Ovary (tissue), 10 donors: ENCODE measurements at regions of chr3 and their contacts with region 1.

Region 1: GRCh38 chr3:33636125-33636850 is 81.8 kb downstream of the CLASP2 start:
- DNase-seq: no peak
- H3K4me3 ChIP-seq: no peak overlapping the region
- H3K27ac ChIP-seq: no peak overlapping the region
- H3K4me1 ChIP-seq: no peaks in the 10 kb centered on the region
- H3K27me3 ChIP-seq: no peaks in the 10 kb centered on the region
- CTCF ChIP-seq: peak; percentile 23 to 46 (median 41)
- EP300 ChIP-seq: no peak
- POLR2A ChIP-seq: no peak

Region 2: GRCh38 chr3:33711100-33711499 is 74.8 kb after region 1 on chr3:
- intact Hi-C with region 1: loop called in 3 of 4 experiments (anchors 5 kb)
- DNase-seq: no peak
- H3K4me3 ChIP-seq: no peak overlapping the region
- H3K27ac ChIP-seq: no peak overlapping the region
- H3K4me1 ChIP-seq: no peaks in the 10 kb centered on the region
- H3K27me3 ChIP-seq: no peaks in the 10 kb centered on the region
- CTCF ChIP-seq: no peak
- EP300 ChIP-seq: no peak
- POLR2A ChIP-seq: no peak

Region 3: GRCh38 chr3:33717866-33718594 is 81.7 kb after region 1 on chr3 and contains the start of gene CLASP2:
- intact Hi-C with region 1: loop called in 3 of 4 experiments (anchors 5 kb)
- DNase-seq: peak; percentile 87 to 92 (median 91)
- H3K4me3 ChIP-seq: peak within 1 kb of the TSS; percentile 98
- H3K27ac ChIP-seq: peak within 1 kb of the TSS; percentile 96 to 100
- H3K4me1 ChIP-seq: no peaks in the 10 kb centered on the region
- H3K27me3 ChIP-seq: no peaks in the 10 kb centered on the region
- CTCF ChIP-seq: peak in 2 of 3 donors; percentile 15 to 26
- EP300 ChIP-seq: no peak
- POLR2A ChIP-seq: peak; percentile 77
- total RNA-seq, gene CLASP2: 51.4 to 71.2 (median 67.1) TPM

Region 4: GRCh38 chr3:33787328-33788009 is 151.2 kb after region 1 on chr3:
- intact Hi-C with region 1: loop called (anchors 5 to 10 kb)
- DNase-seq: peak; percentile 36 to 66 (median 46)
- H3K4me3 ChIP-seq: no peak overlapping the region
- H3K27ac ChIP-seq: no peak overlapping the region
- H3K4me1 ChIP-seq: no peaks in the 10 kb centered on the region
- H3K27me3 ChIP-seq: no peaks in the 10 kb centered on the region
- CTCF ChIP-seq: peak; percentile 49 to 55 (median 54)
- EP300 ChIP-seq: no peak
- POLR2A ChIP-seq: no peak